Transverse colon (tissue), 4 donors: ENCODE measurements at regions of chr2 and their contacts with region 1.

Region 1: GRCh38 chr2:165401285-165401852 is 68.1 kb upstream of the CSRNP3 start:
- DNase-seq: no peak
- H3K4me3 ChIP-seq: no peak overlapping the region
- H3K27ac ChIP-seq: no peak overlapping the region
- H3K4me1 ChIP-seq: peaks cover 0 to 5% (median 0%) of the 10 kb centered on the region in 4 donors
- H3K27me3 ChIP-seq: no peaks in the 10 kb centered on the region
- CTCF ChIP-seq: peak; percentile 63 to 72 (median 67)
- EP300 ChIP-seq: no peak
- POLR2A ChIP-seq: no peak

Region 2: GRCh38 chr2:165417009-165417408 is 15.6 kb after region 1 on chr2:
- in situ Hi-C with region 1: no loop called
- intact Hi-C with region 1: no loop called
- DNase-seq: no peak
- H3K4me3 ChIP-seq: no peak overlapping the region
- H3K27ac ChIP-seq: no peak overlapping the region
- H3K4me1 ChIP-seq: no peaks in the 10 kb centered on the region
- H3K27me3 ChIP-seq: no peaks in the 10 kb centered on the region
- CTCF ChIP-seq: no peak
- EP300 ChIP-seq: no peak
- POLR2A ChIP-seq: no peak

Region 3: DNA sequence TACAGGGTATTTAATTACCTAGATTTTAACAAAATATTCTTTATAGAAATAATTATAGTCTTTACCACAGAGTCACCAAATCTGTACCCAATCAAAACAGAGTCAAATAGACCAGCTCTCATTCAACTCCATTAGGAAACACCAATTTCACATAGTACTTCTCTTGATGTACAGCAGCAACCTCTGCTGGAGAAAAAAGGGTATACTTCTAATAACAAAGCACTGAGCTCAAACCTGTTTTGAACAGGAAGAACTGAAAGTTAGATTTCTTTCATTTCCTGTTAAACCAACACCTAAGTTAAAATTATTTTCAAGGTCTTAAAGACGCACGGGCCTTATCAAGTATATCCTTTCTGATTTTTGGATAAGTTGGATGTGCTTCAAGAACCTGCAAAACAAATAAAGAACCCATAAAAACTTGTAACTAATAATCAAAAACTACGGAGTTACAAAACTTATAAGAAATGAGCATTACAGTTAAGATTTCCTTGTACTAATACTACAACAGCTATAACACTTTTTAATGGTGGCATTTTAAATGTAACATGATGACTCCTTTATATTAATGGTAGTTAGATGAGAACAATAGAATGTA is 473.2 kb after region 1 on chr2:
- in situ Hi-C with region 1: loop called in 3 of 4 experiments (anchors 25 kb)
- intact Hi-C with region 1: no loop called
- DNase-seq: no peak
- H3K4me3 ChIP-seq: no peak overlapping the region
- H3K27ac ChIP-seq: peak overlapping the region in 1 of 4 donors; percentile 30
- H3K4me1 ChIP-seq: peaks cover 0 to 13% (median 0%) of the 10 kb centered on the region in 4 donors
- H3K27me3 ChIP-seq: no peaks in the 10 kb centered on the region
- CTCF ChIP-seq: peak; percentile 52 to 74 (median 62)
- EP300 ChIP-seq: no peak
- POLR2A ChIP-seq: no peak